ENCODE measurements at regions of chr18 and their contacts with region 1.

Region 1: DNA sequence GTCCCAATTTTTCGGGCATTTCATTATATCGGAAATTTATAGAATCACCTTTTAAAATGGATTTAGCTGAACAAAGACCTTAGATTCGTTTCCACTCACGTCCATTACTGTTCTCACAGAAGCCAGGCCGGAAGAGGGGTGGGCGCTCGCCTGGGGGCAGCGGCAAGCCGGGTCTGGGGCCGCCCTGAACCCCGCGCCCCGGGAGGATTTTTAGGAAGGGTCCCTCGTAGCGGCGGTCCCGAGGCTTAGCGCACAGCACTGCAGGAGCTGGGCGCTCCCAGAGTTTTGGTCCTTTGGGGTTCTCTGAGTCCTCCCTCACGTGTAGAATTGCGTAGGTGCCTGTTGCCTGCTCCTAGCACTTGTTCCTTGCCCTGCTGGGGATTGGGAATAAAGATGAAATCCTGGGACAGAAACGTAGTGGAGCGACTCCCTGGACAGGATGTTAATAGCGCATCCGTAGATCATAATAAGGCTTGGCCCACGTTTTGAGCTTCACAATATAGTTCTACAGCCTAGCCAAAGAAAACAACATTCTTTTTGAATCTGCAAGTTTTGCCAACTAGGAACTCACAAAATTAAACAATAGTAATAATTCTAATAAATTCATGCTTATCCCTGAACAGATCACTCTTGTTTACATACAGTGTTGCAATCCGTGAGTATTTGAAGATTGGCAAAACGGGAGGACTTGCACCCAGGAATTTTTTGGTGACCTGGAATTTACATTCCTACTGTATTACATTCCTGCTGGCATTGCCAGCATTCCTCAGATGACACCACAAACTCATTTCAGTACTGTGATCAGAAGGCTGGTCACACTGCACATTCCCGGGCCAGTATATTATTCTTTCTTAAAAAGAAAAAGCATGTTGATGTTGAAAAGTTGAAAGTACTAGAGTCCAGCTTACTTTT is 876 bp downstream of the C18orf63 start:
- DNase-seq: peak; percentile 60 to 95
- H3K4me3 ChIP-seq: no peak overlapping the region
- H3K27ac ChIP-seq: peak overlapping the region; percentile 43
- H3K4me1 ChIP-seq: peaks cover 19% of the 10 kb centered on the region
- H3K27me3 ChIP-seq: no peaks in the 10 kb centered on the region
- CTCF ChIP-seq: no peak

Region 2: DNA sequence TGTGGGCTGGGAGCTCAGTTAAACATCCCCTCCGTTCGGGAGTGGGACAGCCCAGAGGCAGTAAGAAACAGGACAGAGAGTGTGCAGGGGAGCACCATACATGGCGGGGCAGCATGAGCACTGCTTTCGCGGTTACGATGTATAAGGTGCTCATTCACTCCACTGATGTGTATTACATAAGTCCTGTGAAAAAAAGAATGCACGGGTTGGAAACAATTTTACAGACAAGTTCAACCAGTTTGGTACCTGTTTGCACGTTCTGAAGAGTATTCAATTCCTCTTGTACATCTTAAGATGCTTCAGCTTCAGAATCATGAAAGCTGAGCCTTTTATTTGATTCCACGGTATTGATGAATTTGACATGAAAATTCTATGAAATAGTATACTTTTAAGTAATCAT is 1350.9 kb before region 1 on chr18:
- CTCF ChIA-PET with region 1: no interaction called
- POLR2A ChIA-PET with region 1: no interaction called
- intact Hi-C with region 1: no loop called
- DNase-seq: no peak
- H3K4me3 ChIP-seq: no peak overlapping the region
- H3K27ac ChIP-seq: no peak overlapping the region
- H3K4me1 ChIP-seq: no peaks in the 10 kb centered on the region
- H3K27me3 ChIP-seq: no peaks in the 10 kb centered on the region
- CTCF ChIP-seq: no peak

Region 3: GRCh38 chr18:74114116-74114515 is 202.4 kb before region 1 on chr18:
- CTCF ChIA-PET with region 1: no interaction called
- POLR2A ChIA-PET with region 1: no interaction called
- intact Hi-C with region 1: no loop called
- DNase-seq: no peak
- H3K4me3 ChIP-seq: no peak overlapping the region
- H3K27ac ChIP-seq: no peak overlapping the region
- H3K4me1 ChIP-seq: no peaks in the 10 kb centered on the region
- H3K27me3 ChIP-seq: no peaks in the 10 kb centered on the region
- CTCF ChIP-seq: no peak

Region 4: GRCh38 chr18:74184875-74185274 is 131.6 kb before region 1 on chr18:
- CTCF ChIA-PET with region 1: no interaction called
- POLR2A ChIA-PET with region 1: no interaction called
- intact Hi-C with region 1: loop called (anchors 1 kb)
- DNase-seq: peak; percentile 73 to 87
- H3K4me3 ChIP-seq: no peak overlapping the region
- H3K27ac ChIP-seq: peak overlapping the region; percentile 26; the same call in 1 of the 2 replicates
- H3K4me1 ChIP-seq: peaks cover 22% of the 10 kb centered on the region
- H3K27me3 ChIP-seq: no peaks in the 10 kb centered on the region
- CTCF ChIP-seq: no peak

Region 5: DNA sequence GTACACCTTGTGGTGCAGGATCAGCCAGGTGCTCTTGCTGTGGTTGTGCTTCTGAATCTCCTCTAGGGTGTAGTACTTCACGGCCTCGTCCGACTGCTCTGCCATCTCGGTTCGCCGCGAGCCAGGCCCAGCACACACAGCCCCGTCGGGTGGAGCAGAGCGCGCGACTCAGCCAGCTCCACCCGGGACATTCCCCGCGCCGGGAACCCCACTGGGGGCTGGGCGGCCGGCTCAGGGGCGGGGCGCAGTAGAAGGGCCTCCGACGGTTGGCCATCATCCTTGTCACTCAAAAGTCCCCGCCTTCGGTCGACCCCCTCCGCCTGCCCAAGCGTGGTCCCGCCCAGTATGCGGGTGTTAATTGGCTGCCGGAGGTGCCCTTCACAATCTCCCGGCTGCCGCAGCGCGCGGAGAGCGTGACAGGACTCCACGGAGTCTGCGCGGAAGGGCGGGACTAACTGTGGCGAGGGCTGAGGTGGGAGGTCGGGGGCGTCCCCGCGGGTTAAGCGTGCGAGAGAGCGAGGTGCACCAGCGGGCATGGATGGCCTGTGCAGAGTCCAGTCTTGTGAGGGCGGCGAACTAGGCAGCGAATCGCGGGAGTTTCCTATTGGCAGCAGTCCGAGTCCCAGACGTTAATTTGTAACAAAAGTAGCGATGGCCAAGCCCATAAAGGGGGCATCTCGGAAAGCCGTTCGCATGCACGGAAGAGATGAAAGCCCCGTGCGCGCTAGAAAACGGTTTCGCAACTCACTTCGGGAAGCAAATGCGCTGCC is 24.6 kb before region 1 on chr18 and contains the start of gene CYB5A:
- CTCF ChIA-PET with region 1: no interaction called
- POLR2A ChIA-PET with region 1: no interaction called
- intact Hi-C with region 1: loop called (anchors 2 kb)
- DNase-seq: peak; percentile 88 to 98
- H3K4me3 ChIP-seq: peak within 1 kb of the TSS; percentile 81
- H3K27ac ChIP-seq: 0 out of 2 replicates have a peak within 1 kb of the TSS, but pooled peaks have one; percentile 13
- H3K4me1 ChIP-seq: peaks cover 45% of the 10 kb centered on the region
- H3K27me3 ChIP-seq: no peaks in the 10 kb centered on the region
- CTCF ChIP-seq: peak; percentile 43; the same call in 1 of the 2 replicates
- total RNA-seq, gene CYB5A: 105 and 109 TPM in 2 replicates